HepG2 (cell line): ENCODE measurements at regions of chr1 and their contacts with region 1.

Region 1: GRCh38 chr1:9234223-9235095 is at the start of gene H6PD:
- DNase-seq: peak; percentile 76
- ATAC-seq: peak; percentile 69
- H3K4me3 ChIP-seq: peak within 1 kb of the TSS; percentile 78 to 84 (median 83)
- H3K27ac ChIP-seq: peak within 1 kb of the TSS; percentile 92
- H3K4me1 ChIP-seq: peaks cover 74% of the 10 kb centered on the region
- H3K27me3 ChIP-seq: peaks cover 0 to 4% of the 10 kb centered on the region in 2 experiments; a peak in 1 of 5 replicates
- CTCF ChIP-seq: peak; percentile 89
- EP300 ChIP-seq: peak in 1 of 2 experiments; percentile 8; a peak in 1 of 4 replicates
- POLR2A ChIP-seq: peak; percentile 84
- RAD21 ChIP-seq: peak; percentile 73
- total RNA-seq, gene H6PD: 6.3 and 9.3 TPM in 2 replicates

Region 2: GRCh38 chr1:9128520-9129265 is 105.8 kb before region 1 on chr1 and contains the start of gene GPR157:
- CTCF ChIA-PET with region 1: no interaction called
- POLR2A ChIA-PET with region 1: interaction called, 14 read pairs
- in situ Hi-C with region 1: no loop called
- intact Hi-C with region 1: no loop called
- DNase-seq: peak; percentile 62
- ATAC-seq: peak; percentile 75
- H3K4me3 ChIP-seq: peak within 1 kb of the TSS; percentile 71 to 90 (median 90)
- H3K27ac ChIP-seq: peak within 1 kb of the TSS; percentile 63
- H3K4me1 ChIP-seq: peaks cover 35% of the 10 kb centered on the region
- H3K27me3 ChIP-seq: no peaks in the 10 kb centered on the region; a peak in 1 of 5 replicates
- CTCF ChIP-seq: peak; percentile 57
- EP300 ChIP-seq: no peak
- POLR2A ChIP-seq: peak; percentile 15 to 69; a peak in 2 of 4 replicates
- RAD21 ChIP-seq: peak; percentile 73
- total RNA-seq, gene GPR157: 8.4 and 10.1 TPM in 2 replicates

Region 3: DNA sequence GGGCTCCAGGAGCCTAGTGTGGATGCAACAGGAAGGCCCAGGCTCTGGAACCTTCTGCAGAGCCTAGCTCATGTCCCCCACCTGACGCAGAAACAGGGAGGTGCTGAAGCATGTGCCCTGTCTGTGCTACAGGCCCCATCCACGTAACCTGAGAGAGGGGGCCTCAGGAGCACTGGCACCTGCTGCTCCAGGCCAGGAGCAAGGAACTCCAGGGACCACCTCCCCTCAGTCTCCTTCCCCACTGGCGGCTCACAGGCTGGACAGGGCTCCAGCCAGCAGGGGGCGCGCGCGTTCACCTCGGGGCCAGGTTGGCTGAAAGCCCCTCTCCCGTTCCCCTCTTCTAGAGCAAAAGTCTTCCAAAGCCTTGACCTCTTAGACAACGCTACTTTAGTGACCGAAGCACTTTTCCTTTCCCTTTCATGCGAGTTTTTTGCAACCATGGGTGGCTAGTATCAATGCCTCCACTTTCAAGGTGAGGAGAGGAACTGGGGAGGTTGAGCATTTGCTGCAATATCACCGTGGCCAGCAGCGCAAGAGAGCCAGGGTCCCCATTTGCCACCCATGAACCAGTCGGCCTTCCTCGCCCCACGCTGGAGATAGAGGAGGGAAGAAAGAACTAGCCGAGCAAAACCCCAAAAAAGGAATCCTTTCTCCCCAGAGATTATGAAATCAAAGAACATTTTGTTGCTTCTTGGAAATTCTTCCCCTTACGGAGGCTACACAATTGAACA is 53.1 kb before region 1 on chr1:
- CTCF ChIA-PET with region 1: interaction called, 6 read pairs
- POLR2A ChIA-PET with region 1: interaction called, 19 read pairs
- in situ Hi-C with region 1: no loop called
- intact Hi-C with region 1: no loop called
- DNase-seq: peak; percentile 61
- ATAC-seq: peak; percentile 74
- H3K4me3 ChIP-seq: peak overlapping the region; percentile 88 to 94 (median 92)
- H3K27ac ChIP-seq: peak overlapping the region; percentile 92
- H3K4me1 ChIP-seq: peaks cover 71% of the 10 kb centered on the region
- H3K27me3 ChIP-seq: no peaks in the 10 kb centered on the region; a peak in 1 of 5 replicates
- CTCF ChIP-seq: peak; percentile 99
- EP300 ChIP-seq: no peak
- POLR2A ChIP-seq: peak in 1 of 2 experiments; percentile 37; a peak in 1 of 4 replicates
- RAD21 ChIP-seq: peak; percentile 77

Region 4: GRCh38 chr1:9249534-9250410 is 15.3 kb after region 1 on chr1:
- CTCF ChIA-PET with region 1: interaction called, 5 read pairs
- POLR2A ChIA-PET with region 1: interaction called, 303 read pairs
- in situ Hi-C with region 1: no loop called
- intact Hi-C with region 1: no loop called
- DNase-seq: peak; percentile 79
- ATAC-seq: peak; percentile 78
- H3K4me3 ChIP-seq: peak overlapping the region; percentile 46 to 74 (median 52); a peak in 5 of 6 replicates
- H3K27ac ChIP-seq: peak overlapping the region; percentile 86
- H3K4me1 ChIP-seq: peaks cover 62% of the 10 kb centered on the region
- H3K27me3 ChIP-seq: no peaks in the 10 kb centered on the region
- CTCF ChIP-seq: peak; percentile 98
- EP300 ChIP-seq: peak in 1 of 2 experiments; percentile 57; a peak in 2 of 4 replicates
- POLR2A ChIP-seq: peak; percentile 40 to 65; a peak in 3 of 4 replicates
- RAD21 ChIP-seq: peak; percentile 90